SK-N-SH (cell line): ENCODE measurements at regions of chr14 and their contacts with region 1.

Region 1: GRCh38 chr14:105351920-105352851 is 37.6 kb downstream of the PACS2 start:
- DNase-seq: peak; percentile 95
- H3K4me3 ChIP-seq: no peak overlapping the region; a peak in 1 of 4 replicates
- H3K27ac ChIP-seq: peak overlapping the region in 1 of 2 experiments; percentile 44; a peak in 1 of 4 replicates
- H3K4me1 ChIP-seq: peaks cover 0 to 6% of the 10 kb centered on the region in 2 experiments; a peak in 1 of 4 replicates
- H3K27me3 ChIP-seq: no peaks in the 10 kb centered on the region
- CTCF ChIP-seq: peak; percentile 83
- EP300 ChIP-seq: no peak
- RAD21 ChIP-seq: peak; percentile 97

Region 2: GRCh38 chr14:105203057-105203531 is 149.1 kb before region 1 on chr14:
- CTCF ChIA-PET with region 1: interaction called, 10 read pairs
- POLR2A ChIA-PET with region 1: interaction called, 4 read pairs
- DNase-seq: peak; percentile 93
- H3K4me3 ChIP-seq: peak overlapping the region in 1 of 2 experiments; percentile 14; a peak in 1 of 4 replicates
- H3K27ac ChIP-seq: peak overlapping the region in 1 of 2 experiments; percentile 50; a peak in 1 of 4 replicates
- H3K4me1 ChIP-seq: peaks cover 0 to 69% of the 10 kb centered on the region in 2 experiments; a peak in 1 of 4 replicates
- H3K27me3 ChIP-seq: no peaks in the 10 kb centered on the region
- CTCF ChIP-seq: peak; percentile 91
- EP300 ChIP-seq: no peak
- RAD21 ChIP-seq: peak; percentile 74

Region 3: DNA sequence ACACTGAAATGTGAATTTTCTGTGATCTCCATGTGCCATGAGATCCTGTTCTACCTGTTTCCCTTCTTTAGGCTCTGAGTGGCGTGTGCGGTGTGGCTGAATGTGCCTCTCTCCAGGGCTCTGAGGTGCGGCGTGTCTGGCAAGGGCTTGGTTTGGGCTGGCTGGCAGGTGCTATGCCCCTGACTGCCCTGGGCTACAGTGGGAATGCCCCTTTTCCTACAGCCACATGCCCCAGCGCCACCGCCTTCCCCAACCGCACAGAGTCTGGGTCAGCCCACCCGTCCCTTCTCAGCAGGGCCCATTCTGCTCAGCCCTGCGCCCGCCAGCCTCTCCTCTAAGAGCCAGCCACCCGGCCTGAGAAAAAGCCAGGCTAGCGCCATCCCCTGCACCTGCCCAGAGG is 79.1 kb before region 1 on chr14:
- CTCF ChIA-PET with region 1: interaction called, 14 read pairs
- POLR2A ChIA-PET with region 1: no interaction called
- DNase-seq: no peak
- H3K4me3 ChIP-seq: no peak overlapping the region
- H3K27ac ChIP-seq: no peak overlapping the region
- H3K4me1 ChIP-seq: peaks cover 0 to 23% of the 10 kb centered on the region in 2 experiments; a peak in 1 of 4 replicates
- H3K27me3 ChIP-seq: no peaks in the 10 kb centered on the region
- CTCF ChIP-seq: no peak
- EP300 ChIP-seq: no peak
- RAD21 ChIP-seq: no peak

Region 4: GRCh38 chr14:105333613-105334364 is 18.4 kb before region 1 on chr14:
- CTCF ChIA-PET with region 1: interaction called, 11 read pairs
- POLR2A ChIA-PET with region 1: no interaction called
- DNase-seq: peak; percentile 57
- H3K4me3 ChIP-seq: no peak overlapping the region
- H3K27ac ChIP-seq: peak overlapping the region in 1 of 2 experiments; percentile 72; a peak in 2 of 4 replicates
- H3K4me1 ChIP-seq: peaks cover 0 to 64% of the 10 kb centered on the region in 2 experiments; a peak in 2 of 4 replicates
- H3K27me3 ChIP-seq: no peaks in the 10 kb centered on the region
- CTCF ChIP-seq: no peak
- EP300 ChIP-seq: no peak
- RAD21 ChIP-seq: no peak